Endothelial cell of umbilical vein (primary cell): ENCODE measurements at regions of chr3 and their contacts with region 1.

Region 1: GRCh38 chr3:52220380-52221026 is 4.9 kb downstream of the TLR9 start:
- DNase-seq: peak; percentile 68
- H3K4me3 ChIP-seq: no peak overlapping the region
- H3K27ac ChIP-seq: no peak overlapping the region
- H3K4me1 ChIP-seq: peaks cover 32% of the 10 kb centered on the region
- H3K27me3 ChIP-seq: no peaks in the 10 kb centered on the region
- CTCF ChIP-seq: peak; percentile 92 to 97
- POLR2A ChIP-seq: no peak

Region 2: DNA sequence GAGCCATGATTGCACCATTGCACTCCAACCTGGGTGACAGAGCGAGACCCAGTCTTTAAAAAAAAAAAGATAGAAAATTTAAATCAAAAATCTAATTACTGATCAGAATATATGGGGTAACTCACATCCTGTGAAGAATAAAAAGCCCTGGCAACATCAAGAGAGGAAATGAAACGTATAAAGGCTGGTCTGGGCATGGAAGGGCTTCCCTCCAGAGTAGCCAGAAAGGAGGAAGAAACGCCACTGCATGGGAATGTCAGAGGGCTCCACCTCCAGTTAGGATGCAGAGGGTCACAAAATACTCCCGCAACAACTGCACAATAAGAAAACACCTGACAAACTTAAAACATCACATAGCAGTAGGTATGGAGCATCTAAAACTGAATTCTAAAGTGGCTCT is 312.5 kb before region 1 on chr3:
- CTCF ChIA-PET with region 1: no interaction called
- POLR2A ChIA-PET with region 1: no interaction called
- dilution Hi-C with region 1: no loop called
- intact Hi-C with region 1: no loop called
- DNase-seq: no peak
- H3K4me3 ChIP-seq: no peak overlapping the region
- H3K27ac ChIP-seq: no peak overlapping the region
- H3K4me1 ChIP-seq: no peaks in the 10 kb centered on the region
- H3K27me3 ChIP-seq: no peaks in the 10 kb centered on the region
- CTCF ChIP-seq: no peak
- POLR2A ChIP-seq: no peak

Region 3: GRCh38 chr3:51986010-51986947 is 234.2 kb before region 1 on chr3:
- CTCF ChIA-PET with region 1: no interaction called
- POLR2A ChIA-PET with region 1: no interaction called
- dilution Hi-C with region 1: no loop called
- intact Hi-C with region 1: no loop called
- DNase-seq: no peak
- H3K4me3 ChIP-seq: no peak overlapping the region
- H3K27ac ChIP-seq: no peak overlapping the region
- H3K4me1 ChIP-seq: peaks cover 14% of the 10 kb centered on the region
- H3K27me3 ChIP-seq: no peaks in the 10 kb centered on the region
- CTCF ChIP-seq: no peak
- POLR2A ChIP-seq: no peak

Region 4: DNA sequence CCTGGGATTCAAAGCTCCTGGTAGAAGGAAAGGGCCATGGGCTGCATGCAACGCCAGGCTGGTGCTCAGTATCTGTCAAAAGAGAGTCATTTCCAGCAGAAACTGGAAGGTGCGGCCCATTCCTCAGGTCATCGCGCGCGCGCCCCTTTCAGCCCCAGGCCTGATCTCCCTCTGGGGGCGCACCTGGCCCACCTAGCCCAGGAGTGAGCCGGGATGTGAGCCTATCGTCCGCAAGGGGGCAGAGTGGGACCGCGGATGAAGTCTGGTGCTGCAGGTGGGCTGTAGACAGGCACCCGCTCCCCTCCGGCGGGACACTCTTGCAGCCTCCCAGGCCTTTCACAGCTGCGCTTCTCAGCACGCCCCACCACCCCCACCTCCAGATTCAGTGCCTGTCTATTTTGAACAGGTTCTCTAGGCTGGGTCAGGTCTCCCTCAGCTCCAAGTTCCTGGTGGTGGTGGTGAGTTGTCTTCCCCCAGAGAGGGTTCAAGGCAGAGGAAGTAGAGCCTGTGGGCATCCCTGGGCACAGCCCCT is 219.0 kb before region 1 on chr3:
- CTCF ChIA-PET with region 1: interaction called, 8 read pairs
- POLR2A ChIA-PET with region 1: no interaction called
- dilution Hi-C with region 1: no loop called
- intact Hi-C with region 1: loop called (anchors 5 kb)
- DNase-seq: peak; percentile 70
- H3K4me3 ChIP-seq: no peak overlapping the region
- H3K27ac ChIP-seq: no peak overlapping the region
- H3K4me1 ChIP-seq: peaks cover 13% of the 10 kb centered on the region
- H3K27me3 ChIP-seq: no peaks in the 10 kb centered on the region
- CTCF ChIP-seq: peak; percentile 94 to 97
- POLR2A ChIP-seq: no peak

Region 5: GRCh38 chr3:52197842-52198668 is 22.4 kb before region 1 on chr3 and contains the start of gene ALAS1:
- CTCF ChIA-PET with region 1: interaction called, 5 read pairs
- POLR2A ChIA-PET with region 1: no interaction called
- dilution Hi-C with region 1: no loop called
- intact Hi-C with region 1: loop called (anchors 1 kb)
- DNase-seq: peak; percentile 93
- H3K4me3 ChIP-seq: peak within 1 kb of the TSS; percentile 89 to 93 (median 91)
- H3K27ac ChIP-seq: peak within 1 kb of the TSS; percentile 62
- H3K4me1 ChIP-seq: peaks cover 17% of the 10 kb centered on the region
- H3K27me3 ChIP-seq: no peaks in the 10 kb centered on the region
- CTCF ChIP-seq: peak in 1 of 2 donors; percentile 26
- POLR2A ChIP-seq: peak; percentile 97
- total RNA-seq, gene ALAS1: 45.1 and 48.1 TPM in 2 replicates

Region 6: GRCh38 chr3:52248816-52249547 is 28.5 kb after region 1 on chr3:
- CTCF ChIA-PET with region 1: interaction called, 10 read pairs
- POLR2A ChIA-PET with region 1: no interaction called
- dilution Hi-C with region 1: no loop called
- intact Hi-C with region 1: no loop called
- DNase-seq: peak; percentile 38
- H3K4me3 ChIP-seq: no peak overlapping the region
- H3K27ac ChIP-seq: no peak overlapping the region
- H3K4me1 ChIP-seq: peaks cover 23% of the 10 kb centered on the region
- H3K27me3 ChIP-seq: no peaks in the 10 kb centered on the region
- CTCF ChIP-seq: no peak
- POLR2A ChIP-seq: no peak

Region 7: GRCh38 chr3:52291508-52292181 is 71.1 kb after region 1 on chr3:
- CTCF ChIA-PET with region 1: interaction called, 10 read pairs
- POLR2A ChIA-PET with region 1: no interaction called
- dilution Hi-C with region 1: no loop called
- intact Hi-C with region 1: no loop called
- DNase-seq: no peak
- H3K4me3 ChIP-seq: no peak overlapping the region
- H3K27ac ChIP-seq: no peak overlapping the region
- H3K4me1 ChIP-seq: peaks cover 10% of the 10 kb centered on the region
- H3K27me3 ChIP-seq: no peaks in the 10 kb centered on the region
- CTCF ChIP-seq: peak; percentile 47 to 63
- POLR2A ChIP-seq: no peak

Region 8: DNA sequence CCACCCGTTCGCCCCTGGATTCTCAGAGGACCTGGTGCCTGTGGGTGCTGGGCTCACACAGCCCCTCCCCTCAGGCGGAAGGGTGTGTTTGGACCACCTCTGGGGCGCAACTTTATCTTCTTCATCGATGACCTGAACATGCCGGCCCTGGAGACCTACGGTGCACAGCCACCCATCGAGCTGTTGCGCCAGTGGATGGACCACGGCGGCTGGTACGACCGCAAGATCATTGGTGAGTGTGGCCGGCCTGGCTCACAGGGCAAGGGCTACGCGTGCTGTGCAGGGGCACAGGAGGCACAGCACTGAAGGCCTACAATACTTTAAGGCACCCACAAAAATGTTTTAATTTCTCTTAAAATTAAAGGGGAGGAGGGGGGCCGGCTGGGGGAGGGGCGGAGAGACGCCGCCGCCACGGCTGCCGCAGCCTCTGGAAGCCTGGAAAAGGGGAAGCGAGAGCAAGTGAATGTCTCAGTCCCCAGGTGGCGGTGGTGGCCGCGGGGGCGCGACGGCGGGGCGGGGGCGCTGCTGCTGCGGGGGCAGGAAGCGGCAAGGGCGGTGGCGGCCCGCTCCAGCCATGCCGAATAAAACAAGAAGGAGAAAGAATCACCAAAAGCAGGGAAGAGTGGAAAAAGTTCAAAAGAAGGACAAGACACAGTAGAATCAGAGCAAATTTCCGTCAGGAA is 152.5 kb after region 1 on chr3:
- CTCF ChIA-PET with region 1: no interaction called
- POLR2A ChIA-PET with region 1: no interaction called
- dilution Hi-C with region 1: no loop called
- intact Hi-C with region 1: no loop called
- DNase-seq: no peak
- H3K4me3 ChIP-seq: no peak overlapping the region
- H3K27ac ChIP-seq: no peak overlapping the region
- H3K4me1 ChIP-seq: peaks cover 4% of the 10 kb centered on the region
- H3K27me3 ChIP-seq: peaks cover 8 to 15% of the 10 kb centered on the region in 2 experiments
- CTCF ChIP-seq: no peak
- POLR2A ChIP-seq: no peak

Region 9: DNA sequence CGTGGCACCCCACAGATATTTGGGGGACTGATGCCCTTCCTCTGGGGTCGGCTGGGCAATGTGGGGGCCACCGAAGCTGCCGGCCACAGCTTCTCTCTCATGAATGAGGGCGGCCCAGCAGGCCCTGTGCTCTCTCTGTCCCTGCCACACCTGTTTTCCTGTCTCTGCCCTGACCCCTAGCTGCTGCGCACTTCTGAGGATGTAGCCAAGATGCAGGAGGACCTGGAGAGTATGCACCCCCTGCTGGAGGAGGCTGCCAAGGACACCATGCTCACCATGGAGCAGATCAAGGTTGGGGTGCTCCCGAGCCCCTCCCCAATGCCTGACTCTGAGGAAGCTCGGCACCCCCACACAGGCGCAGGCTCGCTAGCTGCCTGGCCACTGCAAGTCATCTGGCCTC is 164.7 kb after region 1 on chr3:
- CTCF ChIA-PET with region 1: interaction called, 17 read pairs
- POLR2A ChIA-PET with region 1: no interaction called
- dilution Hi-C with region 1: no loop called
- intact Hi-C with region 1: loop called (anchors 1 kb)
- DNase-seq: peak; percentile 26
- H3K4me3 ChIP-seq: no peak overlapping the region
- H3K27ac ChIP-seq: no peak overlapping the region
- H3K4me1 ChIP-seq: no peaks in the 10 kb centered on the region
- H3K27me3 ChIP-seq: no peaks in the 10 kb centered on the region
- CTCF ChIP-seq: peak; percentile 50 to 64
- POLR2A ChIP-seq: no peak